ENCODE measurements at regions of chr1 and their contacts with region 1.

Region 1: GRCh38 chr1:14567056-14567455 is 31.4 kb upstream of the KAZN start:
- DNase-seq: peak; percentile 8
- H3K4me3 Mint-ChIP-seq: no peak overlapping the region
- H3K27ac Mint-ChIP-seq: no peak overlapping the region
- H3K4me1 Mint-ChIP-seq: no peaks in the 10 kb centered on the region
- H3K27me3 Mint-ChIP-seq: no peaks in the 10 kb centered on the region
- CTCF ChIP-seq: no peak

Region 2: GRCh38 chr1:14602136-14602535 is 35.1 kb after region 1 on chr1:
- CTCF ChIA-PET with region 1: no interaction called
- intact Hi-C with region 1: no loop called
- DNase-seq: no peak
- H3K4me3 Mint-ChIP-seq: no peak overlapping the region
- H3K27ac Mint-ChIP-seq: no peak overlapping the region
- H3K4me1 Mint-ChIP-seq: no peaks in the 10 kb centered on the region
- H3K27me3 Mint-ChIP-seq: peaks cover 22% of the 10 kb centered on the region
- CTCF ChIP-seq: no peak

Region 3: GRCh38 chr1:14850566-14850965 is 283.5 kb after region 1 on chr1:
- CTCF ChIA-PET with region 1: no interaction called
- intact Hi-C with region 1: loop called (anchors 1 kb)
- DNase-seq: peak; percentile 35
- H3K4me3 Mint-ChIP-seq: no peak overlapping the region
- H3K27ac Mint-ChIP-seq: no peak overlapping the region
- H3K4me1 Mint-ChIP-seq: no peaks in the 10 kb centered on the region
- H3K27me3 Mint-ChIP-seq: peaks cover 38% of the 10 kb centered on the region
- CTCF ChIP-seq: peak; percentile 16

Region 4: GRCh38 chr1:15028102-15028501 is 461.0 kb after region 1 on chr1:
- CTCF ChIA-PET with region 1: no interaction called
- intact Hi-C with region 1: loop called (anchors 2 kb)
- DNase-seq: no peak
- H3K4me3 Mint-ChIP-seq: no peak overlapping the region
- H3K27ac Mint-ChIP-seq: no peak overlapping the region
- H3K4me1 Mint-ChIP-seq: no peaks in the 10 kb centered on the region
- H3K27me3 Mint-ChIP-seq: no peaks in the 10 kb centered on the region
- CTCF ChIP-seq: no peak

Measured in Calu3 (cell line).